KBM-7 (cell line): ENCODE measurements at regions of chr15 and their contacts with region 1.

Region 1: GRCh38 chr15:69058830-69059556 is 44.5 kb downstream of the NOX5 start:
- DNase-seq: peak; percentile 92

Region 2: DNA sequence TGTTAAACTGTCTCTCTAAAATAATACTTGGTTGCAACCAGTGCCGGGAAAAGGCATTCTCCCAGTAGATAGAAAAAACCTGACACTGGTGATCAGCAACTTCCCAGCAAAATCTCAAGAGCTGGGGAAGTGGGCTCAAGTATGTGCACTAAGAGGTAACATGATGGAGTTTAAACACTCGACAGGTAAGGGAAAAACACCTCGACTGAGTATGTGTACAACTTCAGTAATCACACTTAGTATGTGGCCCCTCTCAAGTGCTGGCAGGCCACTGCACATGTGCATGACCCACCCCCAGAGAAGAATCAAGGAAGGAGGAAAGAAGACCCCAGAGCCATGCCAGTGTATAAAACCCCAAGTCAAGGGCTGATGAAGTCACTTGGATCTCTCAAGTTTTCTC is 101.3 kb before region 1 on chr15:
- in situ Hi-C with region 1: no loop called
- DNase-seq: no peak

Region 3: GRCh38 chr15:69185706-69186105 is 126.7 kb after region 1 on chr15:
- in situ Hi-C with region 1: no loop called
- DNase-seq: peak; percentile 28

Region 4: DNA sequence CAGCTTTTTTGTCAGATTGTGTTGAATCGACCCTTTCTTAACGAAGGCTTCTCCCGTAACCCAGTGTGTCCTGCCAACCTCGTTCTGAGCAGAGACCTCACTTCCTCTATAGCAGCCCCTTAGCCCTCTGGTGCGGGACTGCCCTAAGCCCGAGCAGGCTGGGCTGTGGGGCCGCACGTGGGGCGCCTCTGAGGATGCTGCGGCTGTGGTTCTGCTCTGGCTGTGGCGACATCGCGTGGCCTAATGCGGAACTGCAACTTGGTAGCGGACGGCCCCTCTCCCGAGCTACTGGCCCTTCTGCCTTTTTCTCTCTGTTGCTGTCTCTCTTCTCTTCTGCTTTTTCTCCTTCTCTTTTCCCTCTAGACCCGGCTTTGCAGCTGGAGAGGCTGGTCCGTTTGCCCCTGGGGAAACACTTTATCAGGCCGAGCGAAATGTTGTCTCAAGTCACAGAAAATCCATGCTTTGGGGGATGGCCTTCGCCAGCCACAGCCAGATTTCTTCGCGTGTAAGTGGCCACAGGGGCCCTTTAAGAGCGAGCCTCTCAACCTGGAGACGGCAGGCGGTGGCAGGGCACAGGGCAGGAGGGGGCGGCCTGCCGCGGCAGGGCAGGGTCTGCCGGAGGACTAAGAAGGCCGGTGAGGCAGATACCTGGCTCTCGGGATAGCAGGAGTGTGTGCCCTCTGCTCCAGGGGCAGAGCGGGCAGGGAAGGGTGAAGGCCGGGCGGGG is 335.7 kb after region 1 on chr15:
- in situ Hi-C with region 1: loop called (anchors 25 kb)
- DNase-seq: peak; percentile 96